Activated B cell treated with CpG ODN at 0.5 μM for 24 hours (primary cell): ENCODE measurements at regions of chr2 and their contacts with region 1.

Region 1: GRCh38 chr2:61538200-61538919 is at the start of gene XPO1:
- DNase-seq: peak; percentile 96
- ATAC-seq: peak; percentile 77
- H3K4me3 Mint-ChIP-seq: peak within 1 kb of the TSS; percentile 90
- H3K27ac Mint-ChIP-seq: peak within 1 kb of the TSS; percentile 100
- H3K4me1 Mint-ChIP-seq: peaks cover 39% of the 10 kb centered on the region
- H3K27me3 Mint-ChIP-seq: no peaks in the 10 kb centered on the region
- CTCF ChIP-seq: no peak
- total RNA-seq, gene XPO1: 183 and 217 TPM in 2 replicates

Region 2: GRCh38 chr2:60756191-60757041 is 781.9 kb before region 1 on chr2 and contains the start of gene PAPOLG:
- CTCF ChIA-PET with region 1: no interaction called
- POLR2A ChIA-PET with region 1: interaction called, 8 read pairs
- intact Hi-C with region 1: loop called (anchors 1 kb)
- DNase-seq: peak; percentile 96
- ATAC-seq: peak; percentile 100
- H3K4me3 Mint-ChIP-seq: peak within 1 kb of the TSS; percentile 100
- H3K27ac Mint-ChIP-seq: peak within 1 kb of the TSS; percentile 99
- H3K4me1 Mint-ChIP-seq: peaks cover 29% of the 10 kb centered on the region
- H3K27me3 Mint-ChIP-seq: no peaks in the 10 kb centered on the region
- CTCF ChIP-seq: no peak
- total RNA-seq, gene PAPOLG: 20.3 and 20.5 TPM in 2 replicates

Region 3: DNA sequence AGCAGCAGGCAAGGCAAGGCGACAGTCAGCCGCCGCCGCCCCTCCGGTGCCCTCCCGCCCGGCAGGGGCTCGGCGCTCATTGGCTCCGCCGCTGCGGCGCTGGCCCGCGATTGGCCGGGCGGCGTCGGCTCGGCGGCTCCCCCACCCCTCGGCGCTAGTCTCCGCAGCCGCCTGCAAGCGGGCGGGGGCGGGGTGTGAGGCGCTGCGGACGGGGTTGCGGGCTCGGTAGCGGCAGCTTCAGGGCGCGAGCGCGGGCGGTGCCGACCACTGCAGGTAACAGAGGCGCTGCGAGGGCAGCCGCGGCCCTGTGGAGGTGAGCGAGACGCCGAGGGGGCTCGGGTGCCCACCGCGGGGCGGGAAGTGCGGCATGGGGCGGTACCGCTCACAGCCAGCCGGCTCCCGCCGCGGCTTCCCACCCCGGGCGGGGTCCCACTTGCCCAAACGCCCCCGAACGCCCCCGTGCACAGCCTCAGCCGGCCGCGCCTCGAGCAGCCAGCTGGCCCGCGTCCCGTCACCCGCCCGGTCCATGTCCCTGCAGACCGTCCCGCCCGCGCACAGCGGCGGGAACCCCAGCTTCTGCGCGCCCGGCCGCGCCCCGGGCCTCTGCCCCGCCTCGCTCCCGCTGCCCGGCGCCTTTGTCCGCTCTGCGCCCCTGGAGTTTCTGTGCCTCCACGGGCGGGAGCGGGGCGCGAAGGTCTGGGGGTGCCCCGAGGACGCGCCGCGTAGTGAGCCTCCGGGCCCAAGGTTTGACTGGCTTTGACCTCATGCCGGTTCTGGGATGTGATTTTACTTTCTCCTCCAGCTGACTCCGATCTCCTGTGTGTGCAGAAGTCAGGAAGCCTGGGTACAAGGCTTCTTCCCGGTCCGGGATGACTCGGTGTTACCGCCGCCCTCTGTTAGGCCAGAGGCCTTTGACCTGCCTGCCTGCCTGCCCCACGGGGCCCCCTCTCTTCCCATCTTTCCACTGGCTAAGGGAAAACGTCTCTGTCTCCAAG is 472.3 kb before region 1 on chr2 and contains the start of gene SANBR:
- CTCF ChIA-PET with region 1: no interaction called
- POLR2A ChIA-PET with region 1: interaction called, 7 read pairs
- intact Hi-C with region 1: loop called (anchors 5 kb)
- DNase-seq: peak; percentile 85
- ATAC-seq: peak; percentile 98
- H3K4me3 Mint-ChIP-seq: peak within 1 kb of the TSS; percentile 96
- H3K27ac Mint-ChIP-seq: peak within 1 kb of the TSS; percentile 82
- H3K4me1 Mint-ChIP-seq: peaks cover 11% of the 10 kb centered on the region
- H3K27me3 Mint-ChIP-seq: no peaks in the 10 kb centered on the region
- CTCF ChIP-seq: no peak
- total RNA-seq, gene SANBR: 2.0 and 2.2 TPM in 2 replicates

Region 4: DNA sequence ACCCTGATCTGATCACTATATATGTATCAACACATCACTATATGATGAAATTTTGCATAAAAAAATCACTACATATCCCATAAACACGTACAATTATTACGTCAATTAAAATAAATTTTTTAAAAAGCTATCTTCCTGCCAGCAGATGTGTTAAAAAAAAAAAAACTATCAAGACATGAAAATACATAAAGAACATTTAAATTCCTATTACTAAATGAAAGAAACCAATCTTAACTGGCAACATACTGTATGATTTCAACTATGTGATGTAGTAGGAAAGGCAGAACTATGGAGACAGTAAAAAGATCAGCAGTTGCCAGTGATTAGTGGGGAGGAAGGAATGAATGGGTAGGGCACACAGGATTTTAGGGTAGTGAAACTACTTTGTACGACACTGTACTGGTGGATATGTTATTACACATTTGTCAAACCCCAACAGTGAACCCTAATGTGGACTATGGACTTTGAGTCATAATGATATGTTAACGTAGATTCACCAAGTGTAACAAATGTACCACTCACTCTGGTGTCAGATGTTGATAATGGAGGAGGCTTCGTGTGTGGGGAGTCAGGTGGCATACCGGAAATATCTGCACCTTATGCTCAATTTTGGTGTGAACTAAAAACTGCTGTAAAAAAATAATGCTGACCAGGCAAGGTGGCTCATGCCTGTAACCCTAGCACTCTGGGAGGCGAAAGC is 94.9 kb before region 1 on chr2:
- CTCF ChIA-PET with region 1: no interaction called
- POLR2A ChIA-PET with region 1: interaction called, 3 read pairs
- intact Hi-C with region 1: loop called (anchors 1 kb)
- DNase-seq: no peak
- ATAC-seq: peak; percentile 84
- H3K4me3 Mint-ChIP-seq: peak overlapping the region; percentile 44
- H3K27ac Mint-ChIP-seq: peak overlapping the region; percentile 78
- H3K4me1 Mint-ChIP-seq: peaks cover 79% of the 10 kb centered on the region
- H3K27me3 Mint-ChIP-seq: no peaks in the 10 kb centered on the region
- CTCF ChIP-seq: no peak

Region 5: DNA sequence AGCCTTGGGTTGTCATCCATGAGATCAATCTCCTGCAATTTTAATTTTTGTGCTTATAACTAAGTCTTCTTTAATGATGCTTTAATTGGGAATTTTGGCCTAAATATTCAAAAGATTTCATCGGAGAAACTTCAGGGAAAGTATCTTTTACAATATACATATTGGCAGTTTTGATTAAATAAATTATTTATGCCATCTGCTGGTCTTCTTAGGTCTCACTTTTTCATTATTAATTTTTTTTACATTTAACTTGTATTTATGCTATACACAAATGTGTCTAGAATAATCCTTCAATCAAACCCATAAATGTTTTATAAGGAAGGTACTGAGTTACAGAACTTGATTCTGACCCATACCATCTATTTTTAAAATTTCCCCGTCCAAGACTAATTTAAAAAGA is 94.9 kb after region 1 on chr2:
- CTCF ChIA-PET with region 1: no interaction called
- POLR2A ChIA-PET with region 1: no interaction called
- intact Hi-C with region 1: no loop called
- DNase-seq: no peak
- ATAC-seq: no peak
- H3K4me3 Mint-ChIP-seq: no peak overlapping the region
- H3K27ac Mint-ChIP-seq: no peak overlapping the region
- H3K4me1 Mint-ChIP-seq: no peaks in the 10 kb centered on the region
- H3K27me3 Mint-ChIP-seq: no peaks in the 10 kb centered on the region
- CTCF ChIP-seq: no peak

Region 6: DNA sequence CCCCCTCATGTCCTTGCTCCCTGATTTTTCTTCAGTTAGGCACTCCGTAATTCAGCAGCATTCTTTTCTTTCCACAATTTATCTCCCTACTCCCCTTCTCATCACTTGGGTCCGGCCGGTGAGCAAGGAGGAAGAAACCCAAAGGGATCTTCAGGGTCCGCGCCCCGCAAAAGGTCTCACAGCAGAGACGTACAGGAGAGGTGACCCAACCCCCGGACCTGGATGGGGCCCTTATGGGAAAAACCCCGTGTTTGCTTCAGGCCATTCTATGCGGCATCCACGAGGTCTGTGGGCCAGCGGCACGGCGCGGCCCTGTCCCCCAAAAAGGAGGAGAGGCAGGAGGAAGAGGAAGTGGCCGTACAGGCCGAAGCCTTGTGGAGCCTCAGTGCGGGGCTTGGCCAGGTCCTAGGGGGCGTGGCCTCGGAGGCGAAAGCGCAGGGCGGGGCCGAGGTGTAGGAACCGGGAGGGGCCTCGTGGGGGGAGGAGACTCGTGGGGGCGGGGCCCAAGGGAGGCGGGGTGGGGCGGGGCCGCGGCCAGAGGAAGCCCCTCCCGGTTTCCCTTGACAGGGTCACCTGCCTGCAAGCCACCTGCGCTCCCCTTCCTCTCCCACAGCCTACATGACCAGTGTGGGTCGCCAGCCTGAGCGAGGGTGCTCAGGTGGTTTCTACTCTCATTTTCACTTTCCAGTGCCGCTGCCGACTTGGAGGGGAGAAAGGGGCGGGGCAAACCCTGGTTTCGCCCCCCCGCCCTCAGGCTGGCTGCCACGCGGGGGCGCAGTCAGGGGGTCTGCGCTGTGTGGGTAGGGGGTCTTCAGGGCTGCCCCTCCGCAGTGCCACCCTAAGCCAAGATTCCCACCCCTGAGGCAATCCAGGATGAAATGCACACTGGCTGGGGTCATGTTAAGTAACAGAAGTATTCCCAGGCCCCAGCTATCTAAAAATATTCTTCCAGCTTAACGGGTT is 156.2 kb after region 1 on chr2:
- CTCF ChIA-PET with region 1: no interaction called
- POLR2A ChIA-PET with region 1: interaction called, 5 read pairs
- intact Hi-C with region 1: loop called (anchors 1 kb)
- DNase-seq: peak; percentile 86
- ATAC-seq: peak; percentile 98
- H3K4me3 Mint-ChIP-seq: peak overlapping the region; percentile 94
- H3K27ac Mint-ChIP-seq: peak overlapping the region; percentile 92
- H3K4me1 Mint-ChIP-seq: peaks cover 11% of the 10 kb centered on the region
- H3K27me3 Mint-ChIP-seq: no peaks in the 10 kb centered on the region
- CTCF ChIP-seq: no peak

Region 7: DNA sequence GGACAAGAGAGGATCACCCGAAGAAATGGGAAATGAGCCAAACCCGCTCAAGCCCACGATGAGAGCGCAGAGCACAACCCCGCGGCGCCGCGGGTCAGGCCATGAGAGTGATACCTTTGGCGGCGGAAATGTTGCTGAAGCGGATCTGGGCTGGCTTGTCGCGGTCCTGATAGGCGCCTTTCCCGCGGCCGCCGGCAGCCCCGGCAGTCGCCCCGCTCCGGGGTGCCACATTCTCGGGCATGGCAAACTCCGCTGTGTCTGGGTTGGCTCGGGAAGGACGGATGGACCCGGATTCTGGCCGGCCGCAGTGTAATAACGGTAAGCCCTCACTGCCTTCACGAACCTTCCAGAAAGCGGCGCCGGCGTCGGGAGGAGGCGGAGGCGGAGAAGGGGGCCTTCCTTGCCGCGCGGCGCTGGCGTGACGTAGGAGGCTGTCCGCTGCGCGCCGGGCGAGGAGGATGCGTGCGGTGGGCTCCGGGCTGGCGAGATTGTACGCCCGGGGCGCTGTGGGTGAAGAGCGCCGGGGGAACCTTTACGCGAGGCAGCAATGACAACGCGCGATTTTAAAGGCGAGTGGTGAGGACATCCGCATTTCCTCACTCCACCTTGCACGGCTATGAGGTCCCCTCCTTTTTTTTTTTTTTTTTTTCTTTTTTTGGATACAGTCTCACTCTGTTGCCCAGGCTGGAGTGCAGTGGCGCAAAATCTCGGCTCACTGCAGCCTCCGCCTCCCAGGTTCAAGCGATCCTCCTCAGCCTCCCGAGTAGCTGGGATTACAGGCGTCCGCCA is 350.1 kb after region 1 on chr2 and contains the start of gene CCT4:
- CTCF ChIA-PET with region 1: no interaction called
- POLR2A ChIA-PET with region 1: no interaction called
- intact Hi-C with region 1: loop called (anchors 1 kb)
- DNase-seq: peak; percentile 99
- ATAC-seq: peak; percentile 85
- H3K4me3 Mint-ChIP-seq: peak within 1 kb of the TSS; percentile 100
- H3K27ac Mint-ChIP-seq: peak within 1 kb of the TSS; percentile 99
- H3K4me1 Mint-ChIP-seq: peaks cover 23% of the 10 kb centered on the region
- H3K27me3 Mint-ChIP-seq: no peaks in the 10 kb centered on the region
- CTCF ChIP-seq: no peak
- total RNA-seq, gene CCT4: 172 and 188 TPM in 2 replicates